ENCODE measurements at regions of chr18 and their contacts with region 1.

Region 1: GRCh38 chr18:21600526-21601410 is at the start of gene ESCO1:
- DNase-seq: peak; percentile 94 to 98
- ATAC-seq: peak; percentile 93 to 96
- H3K4me3 ChIP-seq: peak within 1 kb of the TSS; percentile 74 to 94 (median 85)
- H3K27ac ChIP-seq: peak within 1 kb of the TSS; percentile 92 to 97 (median 94)
- H3K4me1 ChIP-seq: peaks cover 28 to 31% of the 10 kb centered on the region in 2 donors
- H3K27me3 ChIP-seq: no peaks in the 10 kb centered on the region
- CTCF ChIP-seq: peak; percentile 98 to 100 (median 99)
- POLR2A ChIP-seq: peak; percentile 91 to 92
- total RNA-seq, gene ESCO1: 12.1 to 17.9 (median 17.4) TPM

Region 2: GRCh38 chr18:21038201-21038600 is 562.6 kb before region 1 on chr18:
- in situ Hi-C with region 1: no loop called
- intact Hi-C with region 1: no loop called
- DNase-seq: no peak
- ATAC-seq: no peak
- H3K4me3 ChIP-seq: no peak overlapping the region
- H3K27ac ChIP-seq: no peak overlapping the region
- H3K4me1 ChIP-seq: no peaks in the 10 kb centered on the region
- H3K27me3 ChIP-seq: no peaks in the 10 kb centered on the region
- CTCF ChIP-seq: no peak
- POLR2A ChIP-seq: no peak

Region 3: DNA sequence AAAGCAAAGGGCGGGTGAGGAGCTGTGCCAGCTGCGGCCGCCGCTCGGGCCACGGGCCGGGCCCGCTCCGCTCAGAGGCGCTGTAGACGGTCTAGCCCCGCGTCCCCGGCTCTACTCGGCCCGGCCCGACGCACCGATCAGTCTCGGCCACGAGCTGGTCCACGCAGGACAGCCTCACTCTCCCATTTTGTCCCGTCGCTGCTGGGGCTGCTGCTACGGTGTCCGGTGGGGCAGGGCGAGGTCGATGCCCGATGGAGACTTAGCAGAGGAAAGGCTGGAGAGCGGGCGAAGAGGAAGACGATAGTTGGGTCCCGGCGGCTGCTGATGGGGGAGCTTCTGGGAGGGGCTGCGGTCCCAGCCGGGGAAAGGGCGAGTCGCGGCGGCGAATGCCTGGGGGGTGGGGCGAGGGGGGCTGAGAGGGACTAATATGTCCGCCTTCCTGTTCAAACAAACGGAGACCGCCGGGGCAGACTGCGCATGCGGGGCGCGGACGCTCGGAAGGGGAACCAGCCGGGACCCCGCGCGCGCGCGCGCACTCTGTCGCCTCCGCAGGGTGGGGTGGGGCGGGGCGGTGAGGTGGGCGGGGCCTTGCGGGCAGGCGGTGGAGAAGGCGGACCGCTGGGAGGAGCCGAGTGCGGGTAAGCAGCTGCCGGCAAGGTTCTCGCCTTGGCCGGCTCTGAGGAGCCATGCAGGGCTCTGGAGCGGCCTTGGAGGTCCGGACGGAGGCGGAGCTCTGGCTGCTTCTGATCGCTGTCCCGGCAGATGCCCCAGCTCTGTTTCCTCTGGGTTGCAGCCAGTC is 489.2 kb before region 1 on chr18 and contains the start of gene ROCK1:
- in situ Hi-C with region 1: no loop called
- intact Hi-C with region 1: loop called (anchors 5 kb)
- DNase-seq: peak; percentile 96 to 98
- ATAC-seq: peak; percentile 89 to 91
- H3K4me3 ChIP-seq: peak within 1 kb of the TSS; percentile 81 to 100 (median 98)
- H3K27ac ChIP-seq: peak within 1 kb of the TSS; percentile 96 to 100 (median 99)
- H3K4me1 ChIP-seq: peaks cover 36 to 43% of the 10 kb centered on the region in 2 donors
- H3K27me3 ChIP-seq: no peaks in the 10 kb centered on the region
- CTCF ChIP-seq: no peak
- POLR2A ChIP-seq: peak; percentile 67 to 82
- total RNA-seq, gene ROCK1: 11.0 to 15.7 (median 12.7) TPM

Region 4: GRCh38 chr18:21489119-21489750 is 111.5 kb before region 1 on chr18:
- in situ Hi-C with region 1: no loop called
- intact Hi-C with region 1: loop called (anchors 10 kb)
- DNase-seq: peak in 1 of 2 donors; percentile 58
- ATAC-seq: peak; percentile 55 to 76
- H3K4me3 ChIP-seq: no peak overlapping the region
- H3K27ac ChIP-seq: peak overlapping the region in 3 of 4 donors; percentile 42 to 83 (median 57)
- H3K4me1 ChIP-seq: peaks cover 15 to 25% of the 10 kb centered on the region in 2 donors
- H3K27me3 ChIP-seq: no peaks in the 10 kb centered on the region
- CTCF ChIP-seq: peak; percentile 50 to 76 (median 68)
- POLR2A ChIP-seq: no peak

Region 5: DNA sequence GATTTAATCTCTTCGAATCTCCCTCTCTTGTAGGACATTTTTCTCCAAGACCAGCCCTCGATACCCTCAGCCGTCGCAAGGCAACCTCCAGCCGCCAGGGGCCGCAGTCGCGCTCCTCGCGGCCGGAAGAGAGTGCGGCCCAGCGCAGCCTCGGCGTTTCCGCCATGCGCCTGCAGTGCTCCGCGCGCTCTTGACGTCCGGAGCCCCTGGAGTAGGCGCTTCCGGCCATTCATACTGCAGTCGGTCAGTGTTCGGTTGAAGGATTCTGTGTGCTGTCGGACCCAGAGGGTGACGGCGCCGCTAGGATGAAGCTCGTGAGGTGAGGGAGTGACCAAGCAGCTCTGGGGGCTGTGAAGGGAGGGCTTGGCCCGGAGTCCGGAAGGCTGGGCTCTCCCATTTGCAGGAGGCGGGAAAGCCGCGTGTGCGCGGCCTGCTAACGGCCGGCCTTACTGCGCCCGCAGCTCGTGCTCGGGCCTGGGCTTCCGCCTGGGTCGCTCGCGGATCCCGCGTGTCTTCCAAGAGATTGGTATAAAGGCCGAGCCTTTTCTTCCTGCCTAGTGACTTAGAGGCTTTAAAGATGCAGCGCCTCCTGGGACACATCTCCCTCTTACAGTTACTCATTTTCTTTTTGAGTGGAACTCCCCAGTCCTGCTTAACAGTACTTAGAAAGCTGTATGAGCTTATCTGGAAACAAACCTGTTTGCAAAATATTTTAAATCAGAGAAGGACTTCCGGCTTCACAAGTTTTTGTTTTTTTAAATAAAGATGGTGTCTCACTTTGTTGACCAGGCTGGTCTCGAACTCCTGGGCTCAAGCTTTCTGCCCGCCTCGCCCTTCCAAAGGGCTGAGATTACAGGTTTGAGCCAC is 11.6 kb after region 1 on chr18 and contains the start of gene SNRPD1:
- in situ Hi-C with region 1: no loop called
- intact Hi-C with region 1: loop called (anchors 1 kb)
- DNase-seq: peak; percentile 64 to 75
- ATAC-seq: peak; percentile 94 to 97
- H3K4me3 ChIP-seq: peak within 1 kb of the TSS; percentile 51 to 79 (median 68)
- H3K27ac ChIP-seq: peak within 1 kb of the TSS; percentile 75 to 84 (median 78)
- H3K4me1 ChIP-seq: peaks cover 9 to 16% of the 10 kb centered on the region in 2 donors
- H3K27me3 ChIP-seq: no peaks in the 10 kb centered on the region
- CTCF ChIP-seq: peak; percentile 89 to 97 (median 92)
- POLR2A ChIP-seq: peak; percentile 29 to 42
- total RNA-seq, gene SNRPD1: 4.7 to 16.9 (median 14.1) TPM

Region 6: DNA sequence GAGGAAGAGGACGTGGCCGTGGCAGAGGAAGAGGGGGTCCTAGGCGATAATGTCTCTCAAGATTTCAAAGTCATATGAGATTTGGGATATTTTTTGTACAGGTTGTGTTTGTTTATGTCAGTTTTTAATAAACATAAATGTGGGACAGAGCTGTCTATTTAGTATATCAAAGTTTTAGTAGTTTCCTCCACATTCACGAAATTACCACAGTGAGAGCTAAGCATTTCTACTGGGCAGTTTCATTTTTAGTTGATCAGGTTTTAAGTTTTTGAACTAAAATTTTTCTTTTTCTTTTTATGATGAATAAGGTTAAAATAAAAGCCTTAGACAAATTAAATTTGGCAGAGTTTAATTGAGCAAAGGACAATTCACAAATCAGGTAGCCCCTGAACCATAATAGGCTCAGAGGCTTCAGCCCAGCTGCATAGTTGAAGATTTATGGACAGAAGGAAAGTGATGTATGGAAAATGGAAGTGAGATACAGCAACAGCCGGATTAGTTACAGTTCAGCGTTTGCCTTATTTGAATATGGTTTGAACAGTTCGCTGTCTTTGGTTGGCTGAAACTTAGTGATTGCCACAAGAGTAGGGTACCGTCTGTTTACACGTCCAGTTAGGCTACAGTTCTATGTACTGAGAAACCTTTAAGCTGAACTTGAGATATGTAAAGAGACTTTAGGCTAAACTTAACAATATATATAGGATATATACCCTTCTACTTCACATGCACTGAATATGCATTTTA is 28.5 kb after region 1 on chr18:
- in situ Hi-C with region 1: no loop called
- intact Hi-C with region 1: no loop called
- DNase-seq: no peak
- ATAC-seq: no peak
- H3K4me3 ChIP-seq: no peak overlapping the region
- H3K27ac ChIP-seq: no peak overlapping the region
- H3K4me1 ChIP-seq: no peaks in the 10 kb centered on the region
- H3K27me3 ChIP-seq: no peaks in the 10 kb centered on the region
- CTCF ChIP-seq: no peak
- POLR2A ChIP-seq: no peak

Region 7: GRCh38 chr18:21820035-21820810 is 219.5 kb after region 1 on chr18:
- in situ Hi-C with region 1: no loop called
- intact Hi-C with region 1: loop called (anchors 10 kb)
- DNase-seq: no peak
- ATAC-seq: peak; percentile 46 to 53
- H3K4me3 ChIP-seq: no peak overlapping the region
- H3K27ac ChIP-seq: peak overlapping the region; percentile 12 to 89 (median 76)
- H3K4me1 ChIP-seq: peaks cover 0 to 2% of the 10 kb centered on the region in 2 donors
- H3K27me3 ChIP-seq: no peaks in the 10 kb centered on the region
- CTCF ChIP-seq: peak; percentile 54 to 84 (median 65)
- POLR2A ChIP-seq: no peak